K562 (cell line): ENCODE measurements at regions of chr15 and their contacts with region 1.

Region 1: GRCh38 chr15:74382004-74382816 is 14.8 kb upstream of the CYP11A1 start:
- DNase-seq: peak; percentile 86 to 90 (median 90)
- ATAC-seq: peak; percentile 94
- H3K4me3 ChIP-seq: no peak overlapping the region
- H3K27ac ChIP-seq: no peak overlapping the region
- H3K4me1 ChIP-seq: peaks cover 24 to 48% of the 10 kb centered on the region in 2 experiments
- H3K27me3 ChIP-seq: no peaks in the 10 kb centered on the region
- CTCF ChIP-seq: peak; percentile 96 to 98 (median 97)
- EP300 ChIP-seq: no peak
- POLR2A ChIP-seq: no peak
- RAD21 ChIP-seq: peak; percentile 99 to 100

Region 2: DNA sequence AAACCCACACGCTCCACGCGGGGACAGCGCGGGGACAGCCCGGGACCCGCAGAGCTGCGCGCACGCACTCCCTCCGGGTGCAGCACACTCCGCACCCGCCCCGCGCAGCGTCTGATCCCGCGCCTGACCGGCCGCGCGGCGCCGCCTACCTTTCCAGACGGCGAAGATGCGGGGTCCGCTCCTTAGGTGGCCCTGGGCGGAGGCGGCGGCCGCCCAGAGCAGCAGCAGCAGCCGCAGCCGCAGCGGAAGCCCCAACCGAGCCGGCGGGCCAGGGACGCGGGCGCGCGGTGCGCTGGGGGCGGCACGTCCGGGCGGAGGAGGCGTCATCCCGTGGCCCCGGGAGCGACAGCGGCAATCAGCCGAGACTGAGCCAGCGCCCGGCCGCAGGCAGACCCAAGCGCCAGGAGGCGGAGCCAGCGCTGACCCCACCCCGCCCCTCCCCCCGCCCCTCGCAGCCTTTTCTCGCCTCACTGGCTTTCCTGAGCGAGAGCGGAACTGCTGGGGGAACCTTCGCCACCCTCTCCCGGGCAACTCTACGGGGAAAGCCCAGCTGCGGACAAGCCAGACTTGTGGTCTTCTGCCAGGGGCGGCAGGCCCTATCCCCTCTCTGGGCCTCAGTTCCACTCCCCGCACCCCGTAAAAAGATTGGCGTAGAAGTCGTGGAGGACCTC is 51.5 kb after region 1 on chr15 and contains the start of gene SEMA7A:
- CTCF ChIA-PET with region 1: interaction called, 102 read pairs
- POLR2A ChIA-PET with region 1: interaction called, 12 read pairs
- in situ Hi-C with region 1: loop called (anchors 5 kb)
- intact Hi-C with region 1: loop called (anchors 1 kb)
- DNase-seq: peak; percentile 90 to 98 (median 97)
- ATAC-seq: peak; percentile 91
- H3K4me3 ChIP-seq: peak within 1 kb of the TSS; percentile 73
- H3K27ac ChIP-seq: peak within 1 kb of the TSS; percentile 75
- H3K4me1 ChIP-seq: peaks cover 64 to 67% of the 10 kb centered on the region in 2 experiments
- H3K27me3 ChIP-seq: no peaks in the 10 kb centered on the region
- CTCF ChIP-seq: no peak
- EP300 ChIP-seq: no peak
- POLR2A ChIP-seq: peak; percentile 64; the same call in 1 of the 2 replicates
- RAD21 ChIP-seq: no peak; a peak in 2 of 4 replicates
- polyA plus RNA-seq, gene SEMA7A: 0.04 TPM in 1 of 2 experiments, not detected in the other

Region 3: DNA sequence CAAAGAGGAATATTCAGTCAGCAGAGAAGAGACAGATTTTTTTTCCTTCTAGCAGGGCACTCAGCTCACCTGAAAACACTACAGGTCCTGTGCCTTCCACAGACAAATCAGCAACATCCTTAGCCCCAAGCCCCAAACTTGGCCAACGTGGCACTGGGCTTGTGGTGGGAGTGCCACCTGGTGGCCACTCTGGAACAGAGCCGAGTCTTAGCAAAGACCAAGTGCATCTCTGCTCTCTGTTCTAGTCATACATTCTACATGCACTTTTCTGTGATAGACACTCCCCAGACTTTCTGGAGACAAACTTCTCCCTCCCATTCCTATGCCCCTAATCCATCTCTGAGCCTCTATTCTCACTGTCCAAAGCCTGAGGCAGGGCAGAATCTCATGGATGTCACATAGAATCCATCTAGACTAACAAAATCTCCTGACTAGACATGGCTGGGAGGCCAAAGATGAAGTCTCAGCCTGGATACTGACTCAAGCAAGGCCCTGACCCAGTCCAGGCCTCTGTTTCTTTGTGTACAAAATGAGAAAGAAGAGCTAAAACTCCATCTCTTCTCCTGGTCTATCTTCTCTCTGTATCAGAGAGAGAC is 56.6 kb after region 1 on chr15:
- CTCF ChIA-PET with region 1: interaction called, 102 read pairs
- POLR2A ChIA-PET with region 1: interaction called, 12 read pairs
- in situ Hi-C with region 1: loop called (anchors 5 kb)
- intact Hi-C with region 1: loop called (anchors 1 kb)
- DNase-seq: peak; percentile 75 to 87 (median 78)
- ATAC-seq: peak; percentile 82
- H3K4me3 ChIP-seq: no peak overlapping the region
- H3K27ac ChIP-seq: no peak overlapping the region
- H3K4me1 ChIP-seq: peaks cover 25 to 36% of the 10 kb centered on the region in 2 experiments
- H3K27me3 ChIP-seq: no peaks in the 10 kb centered on the region
- CTCF ChIP-seq: peak; percentile 95 to 97 (median 96)
- EP300 ChIP-seq: 0 out of 2 replicates have a peak, but pooled peaks have one; percentile 7
- POLR2A ChIP-seq: no peak
- RAD21 ChIP-seq: peak; percentile 99 to 100

Region 4: DNA sequence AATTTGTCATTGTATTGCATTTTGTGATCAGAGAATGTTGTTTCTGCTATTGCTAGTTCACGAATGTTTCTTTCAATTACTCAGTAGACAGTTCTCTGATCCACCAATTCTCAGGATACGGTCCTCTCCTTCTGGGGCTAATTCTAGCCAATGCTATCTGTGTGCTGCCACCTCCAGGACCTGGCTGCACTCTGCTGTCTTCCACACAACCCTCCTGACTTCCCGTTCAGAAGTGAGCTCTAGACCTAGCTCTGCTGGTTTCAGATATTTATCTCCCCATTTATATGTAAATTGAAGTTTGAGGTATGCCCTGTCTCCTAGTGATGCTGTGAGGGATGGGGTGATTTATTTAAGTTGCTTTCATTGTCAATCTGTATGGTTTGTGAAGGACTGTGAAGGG is 100.5 kb after region 1 on chr15:
- CTCF ChIA-PET with region 1: interaction called, 5 read pairs
- POLR2A ChIA-PET with region 1: interaction called, 3 read pairs
- in situ Hi-C with region 1: no loop called
- intact Hi-C with region 1: loop called (anchors 2 kb)
- DNase-seq: peak in 3 of 4 experiments; percentile 24 to 32 (median 26)
- ATAC-seq: peak; percentile 91
- H3K4me3 ChIP-seq: no peak overlapping the region
- H3K27ac ChIP-seq: no peak overlapping the region
- H3K4me1 ChIP-seq: no peaks in the 10 kb centered on the region; a peak in 1 of 5 replicates
- H3K27me3 ChIP-seq: no peaks in the 10 kb centered on the region
- CTCF ChIP-seq: peak; percentile 28 to 49 (median 37); a peak in 4 of 6 replicates
- EP300 ChIP-seq: no peak
- POLR2A ChIP-seq: no peak
- RAD21 ChIP-seq: peak in 1 of 2 experiments; percentile 34; a peak in 2 of 4 replicates

Region 5: GRCh38 chr15:74489518-74490338 is 107.5 kb after region 1 on chr15:
- CTCF ChIA-PET with region 1: interaction called, 19 read pairs
- POLR2A ChIA-PET with region 1: no interaction called
- in situ Hi-C with region 1: no loop called
- intact Hi-C with region 1: loop called (anchors 2 kb)
- DNase-seq: peak; percentile 79 to 85 (median 82)
- ATAC-seq: peak; percentile 98
- H3K4me3 ChIP-seq: no peak overlapping the region
- H3K27ac ChIP-seq: peak overlapping the region; percentile 20; the same call in 1 of the 3 replicates
- H3K4me1 ChIP-seq: peaks cover 3 to 4% of the 10 kb centered on the region in 2 experiments; a peak in 3 of 5 replicates
- H3K27me3 ChIP-seq: no peaks in the 10 kb centered on the region
- CTCF ChIP-seq: peak; percentile 64 to 73 (median 68)
- EP300 ChIP-seq: no peak
- POLR2A ChIP-seq: no peak
- RAD21 ChIP-seq: peak; percentile 48 to 66

Region 6: GRCh38 chr15:74620636-74621545 is 238.7 kb after region 1 on chr15:
- CTCF ChIA-PET with region 1: no interaction called
- POLR2A ChIA-PET with region 1: interaction called, 3 read pairs
- in situ Hi-C with region 1: loop called (anchors 5 kb)
- intact Hi-C with region 1: no loop called
- DNase-seq: peak; percentile 53 to 73 (median 64)
- ATAC-seq: peak; percentile 87
- H3K4me3 ChIP-seq: no peak overlapping the region
- H3K27ac ChIP-seq: no peak overlapping the region
- H3K4me1 ChIP-seq: peaks cover 15 to 30% of the 10 kb centered on the region in 2 experiments; a peak in 4 of 5 replicates
- H3K27me3 ChIP-seq: no peaks in the 10 kb centered on the region
- CTCF ChIP-seq: peak; percentile 94 to 99 (median 99)
- EP300 ChIP-seq: no peak
- POLR2A ChIP-seq: no peak
- RAD21 ChIP-seq: peak; percentile 15 to 62; a peak in 2 of 4 replicates

Region 7: GRCh38 chr15:74635228-74635627 is 253.0 kb after region 1 on chr15:
- CTCF ChIA-PET with region 1: interaction called, 13 read pairs
- POLR2A ChIA-PET with region 1: no interaction called
- in situ Hi-C with region 1: no loop called
- intact Hi-C with region 1: no loop called
- DNase-seq: peak; percentile 75 to 83 (median 76)
- ATAC-seq: peak; percentile 89
- H3K4me3 ChIP-seq: no peak overlapping the region
- H3K27ac ChIP-seq: no peak overlapping the region
- H3K4me1 ChIP-seq: no peaks in the 10 kb centered on the region; a peak in 1 of 5 replicates
- H3K27me3 ChIP-seq: no peaks in the 10 kb centered on the region
- CTCF ChIP-seq: peak; percentile 88 to 91 (median 90)
- EP300 ChIP-seq: no peak
- POLR2A ChIP-seq: no peak
- RAD21 ChIP-seq: peak; percentile 82 to 97